ENCODE measurements at regions of chr3 and their contacts with region 1.

Region 1: GRCh38 chr3:25618028-25618427 is 46.7 kb downstream of the TOP2B start:
- DNase-seq: no peak
- ATAC-seq: no peak
- H3K4me3 ChIP-seq: no peak overlapping the region
- H3K4me3 Mint-ChIP-seq: no peak overlapping the region
- H3K27ac ChIP-seq: no peak overlapping the region
- H3K27ac Mint-ChIP-seq: peak overlapping the region in 6 of 9 donors; percentile 6 to 53 (median 44)
- H3K4me1 ChIP-seq: no peaks in the 10 kb centered on the region
- H3K4me1 Mint-ChIP-seq: peaks cover 0 to 9% (median 5%) of the 10 kb centered on the region in 7 donors
- H3K27me3 ChIP-seq: no peaks in the 10 kb centered on the region
- H3K27me3 Mint-ChIP-seq: no peaks in the 10 kb centered on the region

Region 2: DNA sequence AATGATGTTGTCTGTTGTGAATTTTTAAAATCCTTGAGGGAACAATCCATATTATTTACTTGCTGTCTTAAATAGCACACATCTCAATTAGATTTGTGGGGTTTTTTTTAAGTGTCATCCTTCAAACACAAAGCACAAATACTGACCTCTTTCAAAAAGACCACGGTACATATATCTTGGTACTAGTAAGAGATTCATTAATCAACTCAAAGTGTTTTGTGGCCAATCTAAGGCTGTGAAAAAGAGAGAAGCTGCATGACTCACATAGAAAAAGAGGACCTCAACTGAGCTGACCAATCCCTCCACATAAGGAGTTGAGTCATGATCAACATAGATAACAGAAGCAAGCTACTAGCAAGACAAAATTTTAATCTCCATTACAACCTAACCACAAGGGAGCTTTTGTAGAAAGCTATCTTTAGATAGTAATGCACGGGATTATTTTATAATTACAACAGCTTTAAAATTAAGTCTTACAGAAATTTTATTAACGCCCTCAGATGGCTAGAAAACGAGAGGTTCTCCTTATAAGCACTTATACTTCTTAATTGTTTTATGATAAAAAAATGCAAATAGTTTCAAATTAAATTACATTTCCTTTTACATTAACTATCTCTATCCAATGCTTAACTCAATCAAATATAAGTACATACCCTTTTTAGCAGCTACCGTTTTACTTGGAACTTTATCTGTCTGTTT is 13.8 kb before region 1 on chr3:
- CTCF ChIA-PET with region 1: interaction called, 3 read pairs
- POLR2A ChIA-PET with region 1: no interaction called
- intact Hi-C with region 1: loop called in 1 of 2 experiments (anchors 1 kb)
- DNase-seq: no peak
- ATAC-seq: peak; percentile 92
- H3K4me3 ChIP-seq: no peak overlapping the region
- H3K4me3 Mint-ChIP-seq: no peak overlapping the region
- H3K27ac ChIP-seq: no peak overlapping the region
- H3K27ac Mint-ChIP-seq: peak overlapping the region in 4 of 9 donors; percentile 32 to 63 (median 41)
- H3K4me1 ChIP-seq: no peaks in the 10 kb centered on the region
- H3K4me1 Mint-ChIP-seq: peaks cover 0 to 5% (median 0%) of the 10 kb centered on the region in 7 donors
- H3K27me3 ChIP-seq: no peaks in the 10 kb centered on the region
- H3K27me3 Mint-ChIP-seq: no peaks in the 10 kb centered on the region

Region 3: GRCh38 chr3:25633919-25634318 is 15.9 kb after region 1 on chr3:
- CTCF ChIA-PET with region 1: no interaction called
- POLR2A ChIA-PET with region 1: no interaction called
- intact Hi-C with region 1: loop called in 1 of 2 experiments (anchors 2 kb)
- DNase-seq: no peak
- ATAC-seq: no peak
- H3K4me3 ChIP-seq: no peak overlapping the region
- H3K4me3 Mint-ChIP-seq: no peak overlapping the region
- H3K27ac ChIP-seq: no peak overlapping the region
- H3K27ac Mint-ChIP-seq: peak overlapping the region in 4 of 9 donors; percentile 5 to 62 (median 30)
- H3K4me1 ChIP-seq: no peaks in the 10 kb centered on the region
- H3K4me1 Mint-ChIP-seq: peaks cover 7 to 22% (median 14%) of the 10 kb centered on the region in 7 donors
- H3K27me3 ChIP-seq: no peaks in the 10 kb centered on the region
- H3K27me3 Mint-ChIP-seq: no peaks in the 10 kb centered on the region

Region 4: GRCh38 chr3:27528791-27529190 is 1910.8 kb after region 1 on chr3:
- CTCF ChIA-PET with region 1: no interaction called
- POLR2A ChIA-PET with region 1: no interaction called
- intact Hi-C with region 1: no loop called
- DNase-seq: no peak
- ATAC-seq: no peak
- H3K4me3 ChIP-seq: no peak overlapping the region
- H3K4me3 Mint-ChIP-seq: no peak overlapping the region
- H3K27ac ChIP-seq: no peak overlapping the region
- H3K27ac Mint-ChIP-seq: no peak overlapping the region
- H3K4me1 ChIP-seq: peaks cover 0 to 6% of the 10 kb centered on the region in 2 donors
- H3K4me1 Mint-ChIP-seq: peaks cover 0 to 10% (median 4%) of the 10 kb centered on the region in 7 donors
- H3K27me3 ChIP-seq: no peaks in the 10 kb centered on the region
- H3K27me3 Mint-ChIP-seq: no peaks in the 10 kb centered on the region

Measured in naive thymus-derived CD4-positive, alpha-beta T cell (primary cell).